ENCODE measurements at regions of chr15 and their contacts with region 1.

Region 1: DNA sequence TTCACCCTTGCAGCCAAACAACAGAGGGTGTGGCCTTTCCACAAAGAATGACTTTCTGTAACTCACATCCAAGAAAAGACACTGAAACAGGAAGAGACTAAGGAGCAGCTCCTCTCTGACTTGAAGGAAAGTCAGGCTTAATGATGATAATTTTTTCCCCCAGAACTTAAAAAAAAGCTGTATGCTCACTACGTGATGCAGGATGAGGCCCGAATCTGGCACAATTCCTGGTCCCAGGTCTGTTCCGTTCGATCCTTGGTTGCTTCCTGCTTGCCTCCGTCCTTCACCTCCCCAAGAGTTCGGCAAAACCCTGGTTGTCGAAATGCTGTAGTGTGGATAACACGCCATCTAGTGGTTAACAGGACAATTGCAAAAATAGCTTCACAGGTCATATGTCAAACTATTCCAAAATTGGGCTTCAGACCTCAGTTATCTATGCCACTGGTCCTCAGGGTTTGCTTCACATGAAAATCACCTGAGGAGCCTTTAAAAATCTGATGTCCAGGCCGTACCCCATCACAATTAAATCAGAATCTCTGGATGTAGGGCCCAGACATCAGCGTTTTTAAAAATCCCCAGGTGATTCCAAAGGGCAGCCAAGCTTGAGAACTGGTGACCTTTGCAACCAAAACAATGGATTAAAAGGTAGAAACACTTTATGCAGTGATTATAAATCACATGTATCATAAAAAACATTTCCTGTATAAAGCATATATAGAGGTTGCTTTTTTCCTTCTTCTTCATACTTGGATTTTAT is 28.1 kb upstream of the SYNM start:
- DNase-seq: peak; percentile 54
- ATAC-seq: peak; percentile 83
- H3K4me3 Mint-ChIP-seq: peak overlapping the region; percentile 63
- H3K27ac Mint-ChIP-seq: no peak overlapping the region
- H3K4me1 Mint-ChIP-seq: peaks cover 4% of the 10 kb centered on the region
- H3K27me3 Mint-ChIP-seq: peaks cover 20% of the 10 kb centered on the region

Region 2: GRCh38 chr15:98779463-98780071 is 297.2 kb before region 1 on chr15:
- CTCF ChIA-PET with region 1: interaction called, 22 read pairs
- DNase-seq: peak; percentile 71
- ATAC-seq: peak; percentile 88
- H3K4me3 Mint-ChIP-seq: no peak overlapping the region
- H3K27ac Mint-ChIP-seq: no peak overlapping the region
- H3K4me1 Mint-ChIP-seq: peaks cover 16% of the 10 kb centered on the region
- H3K27me3 Mint-ChIP-seq: peaks cover 13% of the 10 kb centered on the region

Region 3: DNA sequence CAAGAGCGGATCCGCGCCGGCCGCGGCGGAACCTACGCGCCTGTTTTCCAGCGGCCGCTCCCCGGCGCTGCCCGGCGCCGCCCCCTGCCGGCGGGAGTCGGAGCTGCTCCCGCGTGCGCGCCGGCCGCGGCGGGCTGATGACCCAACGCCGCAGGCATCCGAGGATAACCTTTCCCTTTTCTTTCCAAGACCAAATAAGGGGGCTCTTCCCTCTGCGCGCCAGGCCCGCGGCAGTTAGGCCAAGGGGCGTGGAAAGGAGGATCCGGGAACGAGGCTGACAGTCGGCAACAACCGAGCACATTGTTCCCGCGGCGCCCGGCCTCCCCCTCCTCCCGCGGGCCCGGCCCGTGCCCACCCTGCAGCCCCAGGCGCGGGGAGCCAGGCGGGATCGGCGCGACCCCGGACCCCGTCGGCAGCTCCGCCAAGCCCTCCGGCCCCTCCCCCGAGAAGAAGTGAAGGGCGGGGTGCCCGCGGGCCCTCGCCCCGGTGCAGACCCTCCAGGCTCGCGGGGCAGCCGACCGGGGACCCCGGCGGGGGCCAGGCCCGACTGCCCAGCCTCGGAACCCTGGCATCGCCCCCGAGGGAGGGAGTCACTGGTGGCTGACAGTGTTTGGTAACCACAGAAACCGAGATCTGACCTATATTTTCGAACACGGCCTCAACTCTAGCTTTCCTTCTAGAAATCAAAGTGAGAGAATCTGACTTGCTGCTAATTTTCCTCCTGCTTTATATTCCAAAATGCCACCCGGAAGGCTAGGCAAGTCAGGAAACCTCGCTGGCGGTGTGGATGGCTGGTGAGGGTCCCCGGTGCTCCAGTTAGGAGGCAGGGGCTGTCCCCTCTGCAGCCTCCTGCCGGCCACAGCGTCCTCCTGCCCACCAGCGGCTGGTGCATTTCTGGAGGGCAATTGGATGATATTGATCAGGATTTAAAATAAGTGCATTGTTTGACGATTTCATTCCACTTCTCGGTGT is 17.4 kb before region 1 on chr15:
- CTCF ChIA-PET with region 1: interaction called, 38 read pairs
- DNase-seq: no peak
- ATAC-seq: peak; percentile 88
- H3K4me3 Mint-ChIP-seq: peak overlapping the region; percentile 39
- H3K27ac Mint-ChIP-seq: no peak overlapping the region
- H3K4me1 Mint-ChIP-seq: peaks cover 5% of the 10 kb centered on the region
- H3K27me3 Mint-ChIP-seq: peaks cover 45% of the 10 kb centered on the region